ENCODE measurements at regions of chr2 and their contacts with region 1.

Region 1: GRCh38 chr2:27303093-27304025 is 4.9 kb downstream of the UCN start:
- DNase-seq: peak; percentile 70
- ATAC-seq: peak; percentile 83
- H3K4me3 ChIP-seq: peak overlapping the region; percentile 38 to 51
- H3K27ac ChIP-seq: no peak overlapping the region; the same call in 1 of the 2 replicates
- H3K4me1 ChIP-seq: peaks cover 0 to 8% of the 10 kb centered on the region in 2 experiments; a peak in 3 of 4 replicates
- H3K27me3 ChIP-seq: no peaks in the 10 kb centered on the region
- CTCF ChIP-seq: peak; percentile 73 to 93 (median 81)
- POLR2A ChIP-seq: no peak
- RAD21 ChIP-seq: peak; percentile 86

Region 2: GRCh38 chr2:26555246-26556133 is 747.9 kb before region 1 on chr2:
- CTCF ChIA-PET with region 1: no interaction called
- POLR2A ChIA-PET with region 1: no interaction called
- RAD21 ChIA-PET with region 1: no interaction called
- intact Hi-C with region 1: no loop called
- DNase-seq: no peak
- ATAC-seq: peak; percentile 85
- H3K4me3 ChIP-seq: no peak overlapping the region
- H3K27ac ChIP-seq: no peak overlapping the region
- H3K4me1 ChIP-seq: peaks cover 3 to 13% of the 10 kb centered on the region in 2 experiments; a peak in 3 of 4 replicates
- H3K27me3 ChIP-seq: no peaks in the 10 kb centered on the region
- CTCF ChIP-seq: peak; percentile 37 to 54 (median 43); a peak in 5 of 6 replicates
- POLR2A ChIP-seq: no peak
- RAD21 ChIP-seq: peak; percentile 45

Region 3: GRCh38 chr2:26959331-26959730 is 344.0 kb before region 1 on chr2:
- CTCF ChIA-PET with region 1: interaction called, 13 read pairs
- POLR2A ChIA-PET with region 1: no interaction called
- RAD21 ChIA-PET with region 1: interaction called in 1 of 2 experiments, 3 read pairs
- intact Hi-C with region 1: no loop called
- DNase-seq: no peak
- ATAC-seq: no peak
- H3K4me3 ChIP-seq: no peak overlapping the region
- H3K27ac ChIP-seq: no peak overlapping the region
- H3K4me1 ChIP-seq: peaks cover 0 to 7% of the 10 kb centered on the region in 2 experiments; a peak in 2 of 4 replicates
- H3K27me3 ChIP-seq: no peaks in the 10 kb centered on the region
- CTCF ChIP-seq: no peak
- POLR2A ChIP-seq: no peak
- RAD21 ChIP-seq: no peak

Region 4: GRCh38 chr2:27095745-27096651 is 207.4 kb before region 1 on chr2:
- CTCF ChIA-PET with region 1: interaction called, 5 read pairs
- POLR2A ChIA-PET with region 1: no interaction called
- RAD21 ChIA-PET with region 1: interaction called in 1 of 2 experiments, 3 read pairs
- intact Hi-C with region 1: loop called (anchors 1 kb)
- DNase-seq: no peak
- ATAC-seq: peak; percentile 88
- H3K4me3 ChIP-seq: no peak overlapping the region
- H3K27ac ChIP-seq: no peak overlapping the region
- H3K4me1 ChIP-seq: peaks cover 0 to 9% of the 10 kb centered on the region in 2 experiments; a peak in 1 of 4 replicates
- H3K27me3 ChIP-seq: no peaks in the 10 kb centered on the region
- CTCF ChIP-seq: no peak
- POLR2A ChIP-seq: peak; percentile 25
- RAD21 ChIP-seq: no peak

Region 5: DNA sequence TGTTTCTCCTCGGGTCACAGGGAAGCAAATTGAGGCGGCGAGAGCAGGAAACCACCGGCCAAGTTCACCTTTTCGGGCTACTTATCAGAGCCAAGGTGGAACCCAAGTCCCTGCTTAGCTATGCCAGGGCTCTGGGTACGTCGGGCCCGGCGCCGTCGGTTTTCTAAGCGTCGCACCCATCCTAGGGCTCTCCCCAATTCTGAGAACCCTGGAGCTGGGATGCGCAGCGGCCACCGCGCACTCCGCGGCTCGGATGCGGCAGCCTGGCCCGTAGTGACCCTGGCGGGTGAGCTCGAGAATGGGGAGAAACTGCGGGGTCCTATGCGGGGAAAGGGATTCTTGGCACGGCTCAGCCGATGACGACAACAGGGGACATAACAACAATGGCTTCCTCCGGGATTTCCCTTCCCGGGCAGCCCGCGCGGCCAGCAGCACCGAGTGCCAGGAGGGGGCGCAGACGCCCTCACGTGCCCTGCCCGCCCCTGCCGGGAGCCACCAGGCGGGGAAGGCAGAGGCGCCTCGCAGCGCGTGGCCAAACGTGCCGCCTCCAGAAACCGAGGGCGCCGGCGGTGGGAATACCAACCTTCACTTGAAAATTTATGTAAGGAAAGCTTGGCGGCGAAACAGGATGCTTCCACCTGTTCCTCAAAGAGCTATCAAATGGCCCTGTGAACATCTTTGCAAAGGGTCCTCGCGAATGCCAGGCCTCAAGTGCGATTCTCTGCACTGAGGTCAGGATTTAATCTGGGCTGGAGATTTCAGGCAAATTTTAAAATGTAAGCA is 38.4 kb before region 1 on chr2:
- CTCF ChIA-PET with region 1: interaction called, 6 read pairs
- POLR2A ChIA-PET with region 1: no interaction called
- RAD21 ChIA-PET with region 1: interaction called in 1 of 2 experiments, 4 read pairs
- intact Hi-C with region 1: loop called (anchors 5 kb)
- DNase-seq: peak; percentile 54
- ATAC-seq: peak; percentile 69
- H3K4me3 ChIP-seq: peak overlapping the region; percentile 52 to 84
- H3K27ac ChIP-seq: peak overlapping the region; percentile 45; the same call in 1 of the 2 replicates
- H3K4me1 ChIP-seq: peaks cover 19 to 37% of the 10 kb centered on the region in 2 experiments
- H3K27me3 ChIP-seq: peaks cover 13% of the 10 kb centered on the region; the same call in 1 of the 2 replicates
- CTCF ChIP-seq: peak; percentile 68 to 72 (median 70); a peak in 5 of 6 replicates
- POLR2A ChIP-seq: no peak
- RAD21 ChIP-seq: no peak; the same call in 1 of the 2 replicates

Region 6: GRCh38 chr2:27291865-27292264 is 11.5 kb before region 1 on chr2:
- CTCF ChIA-PET with region 1: interaction called, 39 read pairs
- POLR2A ChIA-PET with region 1: interaction called, 10 read pairs
- RAD21 ChIA-PET with region 1: no interaction called
- intact Hi-C with region 1: no loop called
- DNase-seq: no peak
- ATAC-seq: peak; percentile 67; the same call in 1 of the 2 replicates
- H3K4me3 ChIP-seq: no peak overlapping the region
- H3K27ac ChIP-seq: no peak overlapping the region
- H3K4me1 ChIP-seq: peaks cover 21 to 23% of the 10 kb centered on the region in 2 experiments
- H3K27me3 ChIP-seq: no peaks in the 10 kb centered on the region
- CTCF ChIP-seq: peak; percentile 17 to 37 (median 25); a peak in 4 of 6 replicates
- POLR2A ChIP-seq: no peak
- RAD21 ChIP-seq: peak; percentile 56

Measured in HCT116 (cell line).